ENCODE measurements at regions of chr9 and their contacts with region 1.

Region 1: DNA sequence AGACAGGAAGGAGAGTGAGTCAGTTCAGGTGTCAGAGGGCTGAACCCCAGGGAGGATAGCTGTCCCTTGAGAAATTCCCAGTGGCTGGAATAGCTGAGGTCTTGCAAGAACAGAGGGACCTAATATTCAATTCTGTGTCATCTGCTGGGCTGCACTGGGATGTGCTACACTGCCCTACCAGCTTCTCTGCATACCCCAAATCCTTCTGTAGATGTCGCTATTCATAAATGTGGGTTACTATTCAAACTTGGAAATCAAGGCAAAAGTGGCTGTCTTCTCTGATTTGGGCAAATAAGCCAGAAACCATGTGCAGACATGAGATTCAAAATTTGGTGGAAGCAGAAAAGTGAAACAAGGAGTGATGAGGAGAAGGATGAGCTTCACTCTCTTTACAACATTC is 16.3 kb downstream of the TNFSF8 start:
- DNase-seq: no peak
- H3K4me3 ChIP-seq: no peak overlapping the region
- H3K4me3 Mint-ChIP-seq: no peak overlapping the region
- H3K27ac ChIP-seq: no peak overlapping the region
- H3K27ac Mint-ChIP-seq: peak overlapping the region; percentile 44 to 90 (median 65)
- H3K4me1 ChIP-seq: peaks cover 39% of the 10 kb centered on the region
- H3K4me1 Mint-ChIP-seq: peaks cover 5 to 82% (median 69%) of the 10 kb centered on the region in 3 donors
- H3K27me3 ChIP-seq: no peaks in the 10 kb centered on the region
- H3K27me3 Mint-ChIP-seq: no peaks in the 10 kb centered on the region

Region 2: DNA sequence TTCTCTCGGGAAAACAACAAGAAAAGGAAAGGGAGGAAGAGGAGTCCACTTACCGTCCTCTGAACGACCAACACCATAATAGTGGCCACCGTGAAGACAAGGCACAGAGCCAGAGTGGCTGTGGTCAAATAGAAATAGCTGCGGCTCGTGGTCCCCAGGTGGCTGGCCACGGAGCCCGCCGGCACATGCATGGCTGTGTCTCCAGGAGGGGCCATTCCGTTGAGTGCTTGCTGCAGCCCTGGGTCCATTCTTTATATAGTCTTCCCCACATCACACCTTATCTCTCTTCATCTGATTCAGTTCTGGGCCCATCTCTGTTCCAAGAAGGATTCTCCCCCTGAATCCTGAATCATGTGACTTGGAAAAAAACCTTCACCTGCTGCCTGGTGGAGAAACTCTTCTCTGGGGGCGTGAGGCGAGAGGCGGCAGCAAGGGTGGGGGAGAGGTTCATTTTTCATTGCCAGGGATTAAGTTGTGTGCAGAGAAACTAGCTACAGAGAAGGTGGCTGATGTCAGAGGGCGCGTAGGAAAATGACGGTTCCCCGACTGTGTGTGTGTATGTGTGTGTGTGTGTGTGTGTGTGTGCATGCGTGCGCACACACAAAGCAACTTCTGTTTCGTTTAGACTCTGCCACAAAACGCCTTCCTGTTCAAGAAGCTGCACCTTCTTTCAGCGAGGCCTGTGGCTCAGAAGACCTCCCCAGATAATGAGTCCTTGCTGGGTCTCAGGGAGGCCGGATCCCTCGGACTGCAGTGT is 16.1 kb after region 1 on chr9 and contains the start of gene TNFSF8:
- CTCF ChIA-PET with region 1: interaction called, 66 read pairs
- POLR2A ChIA-PET with region 1: interaction called, 15 read pairs
- DNase-seq: peak; percentile 54 to 91 (median 79)
- H3K4me3 ChIP-seq: peak within 1 kb of the TSS; percentile 89
- H3K4me3 Mint-ChIP-seq: peak within 1 kb of the TSS; percentile 89 to 98 (median 97)
- H3K27ac ChIP-seq: peak within 1 kb of the TSS; percentile 60
- H3K27ac Mint-ChIP-seq: peak within 1 kb of the TSS; percentile 86 to 99 (median 98)
- H3K4me1 ChIP-seq: peaks cover 36% of the 10 kb centered on the region
- H3K4me1 Mint-ChIP-seq: peaks cover 38 to 56% (median 51%) of the 10 kb centered on the region in 3 donors
- H3K27me3 ChIP-seq: no peaks in the 10 kb centered on the region
- H3K27me3 Mint-ChIP-seq: peaks cover 0 to 3% of the 10 kb centered on the region in 2 donors
- total RNA-seq, gene TNFSF8: 72.6 to 73.2 TPM